Activated T-helper 1 cell treated with anti-CD3 and anti-CD28 coated beads, Interleukin-12 subunit alpha, Interleukin-12 subunit beta, Interleukin-2, Interleukin-4 antibody, amounts not matched to agents 30 ng/mL and 10 ng/mL and 1 ng/mL, durations not matched to agents 14 hours and 24 hours and 36 hours (primary cell): ENCODE measurements at regions of chr9 and their contacts with region 1.

Region 1: DNA sequence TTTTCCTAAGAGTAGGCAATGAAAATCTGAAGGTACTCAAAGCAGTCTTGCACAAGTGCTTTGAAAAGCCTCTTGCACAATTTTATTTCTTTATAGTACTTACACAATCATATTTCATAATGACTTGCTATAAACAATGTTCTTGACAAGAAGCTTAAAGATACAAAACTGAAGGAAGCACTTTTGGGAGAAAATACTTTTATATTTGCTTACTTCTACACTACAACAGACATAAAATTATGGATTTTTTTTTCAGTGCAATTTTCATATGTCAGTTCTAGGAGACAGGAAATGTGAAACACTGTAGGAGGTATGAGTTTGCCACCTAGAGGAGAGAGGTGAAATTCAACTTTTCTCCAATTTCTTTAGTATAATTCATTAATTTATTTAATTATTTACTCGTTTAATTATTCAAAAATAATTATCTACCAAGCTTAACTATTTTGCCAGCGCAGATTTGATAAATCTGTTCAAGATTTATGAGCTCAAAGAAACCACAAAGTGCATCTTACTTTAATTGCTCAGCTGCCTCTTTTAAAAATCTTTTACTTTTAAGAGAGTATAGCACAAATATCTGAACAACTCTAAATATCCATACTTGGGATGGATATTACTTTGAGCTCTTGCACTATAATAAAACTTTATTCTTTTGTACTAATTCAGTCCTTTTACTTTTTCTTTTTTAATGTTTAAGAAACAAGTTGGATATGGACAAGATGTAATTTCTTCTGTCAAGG is 29.0 kb upstream of the CDKN2B start:
- DNase-seq: no peak
- H3K4me3 Mint-ChIP-seq: no peak overlapping the region
- H3K27ac Mint-ChIP-seq: no peak overlapping the region
- H3K4me1 Mint-ChIP-seq: peaks cover 41% of the 10 kb centered on the region
- H3K27me3 Mint-ChIP-seq: peaks cover 30% of the 10 kb centered on the region

Region 2: GRCh38 chr9:21688108-21689102 is 349.7 kb before region 1 on chr9:
- intact Hi-C with region 1: loop called (anchors 10 kb)
- DNase-seq: no peak
- H3K4me3 Mint-ChIP-seq: no peak overlapping the region
- H3K27ac Mint-ChIP-seq: no peak overlapping the region
- H3K4me1 Mint-ChIP-seq: peaks cover 41% of the 10 kb centered on the region
- H3K27me3 Mint-ChIP-seq: peaks cover 2% of the 10 kb centered on the region

Region 3: GRCh38 chr9:22052376-22052945 is 14.3 kb after region 1 on chr9:
- intact Hi-C with region 1: loop called (anchors 1 kb)
- DNase-seq: peak; percentile 40
- H3K4me3 Mint-ChIP-seq: no peak overlapping the region
- H3K27ac Mint-ChIP-seq: peak overlapping the region; percentile 5
- H3K4me1 Mint-ChIP-seq: peaks cover 32% of the 10 kb centered on the region
- H3K27me3 Mint-ChIP-seq: peaks cover 26% of the 10 kb centered on the region

Region 4: GRCh38 chr9:22105005-22105722 is 67.0 kb after region 1 on chr9:
- intact Hi-C with region 1: loop called (anchors 2 kb)
- DNase-seq: no peak
- H3K4me3 Mint-ChIP-seq: no peak overlapping the region
- H3K27ac Mint-ChIP-seq: no peak overlapping the region
- H3K4me1 Mint-ChIP-seq: peaks cover 47% of the 10 kb centered on the region
- H3K27me3 Mint-ChIP-seq: peaks cover 27% of the 10 kb centered on the region

Region 5: GRCh38 chr9:22238809-22239684 is 200.9 kb after region 1 on chr9:
- intact Hi-C with region 1: loop called (anchors 2 kb)
- DNase-seq: no peak
- H3K4me3 Mint-ChIP-seq: no peak overlapping the region
- H3K27ac Mint-ChIP-seq: no peak overlapping the region
- H3K4me1 Mint-ChIP-seq: peaks cover 50% of the 10 kb centered on the region
- H3K27me3 Mint-ChIP-seq: peaks cover 43% of the 10 kb centered on the region

Region 6: GRCh38 chr9:22452415-22453010 is 414.4 kb after region 1 on chr9:
- intact Hi-C with region 1: loop called (anchors 1 kb)
- DNase-seq: no peak
- H3K4me3 Mint-ChIP-seq: no peak overlapping the region
- H3K27ac Mint-ChIP-seq: no peak overlapping the region
- H3K4me1 Mint-ChIP-seq: no peaks in the 10 kb centered on the region
- H3K27me3 Mint-ChIP-seq: peaks cover 24% of the 10 kb centered on the region